Dendritic cell treated with granulocyte-macrophage colony-stimulating factor and Interleukin-4, amounts not matched to agents 40 ng/mL and 50 ng/mL, for 4 days (primary cell): ENCODE measurements at regions of chr9 and their contacts with region 1.

Region 1: GRCh38 chr9:129968690-129969501 is 74.1 kb downstream of the FNBP1 start:
- H3K4me3 Mint-ChIP-seq: no peak overlapping the region
- H3K27ac Mint-ChIP-seq: peak overlapping the region; percentile 85
- H3K4me1 Mint-ChIP-seq: peaks cover 66% of the 10 kb centered on the region
- H3K27me3 Mint-ChIP-seq: no peaks in the 10 kb centered on the region

Region 2: GRCh38 chr9:129932303-129933151 is 36.4 kb before region 1 on chr9:
- intact Hi-C with region 1: loop called (anchors 5 kb)
- H3K4me3 Mint-ChIP-seq: peak overlapping the region; percentile 31
- H3K27ac Mint-ChIP-seq: peak overlapping the region; percentile 76
- H3K4me1 Mint-ChIP-seq: peaks cover 32% of the 10 kb centered on the region
- H3K27me3 Mint-ChIP-seq: no peaks in the 10 kb centered on the region